ENCODE measurements at regions of chr1 and their contacts with region 1.

Region 1: DNA sequence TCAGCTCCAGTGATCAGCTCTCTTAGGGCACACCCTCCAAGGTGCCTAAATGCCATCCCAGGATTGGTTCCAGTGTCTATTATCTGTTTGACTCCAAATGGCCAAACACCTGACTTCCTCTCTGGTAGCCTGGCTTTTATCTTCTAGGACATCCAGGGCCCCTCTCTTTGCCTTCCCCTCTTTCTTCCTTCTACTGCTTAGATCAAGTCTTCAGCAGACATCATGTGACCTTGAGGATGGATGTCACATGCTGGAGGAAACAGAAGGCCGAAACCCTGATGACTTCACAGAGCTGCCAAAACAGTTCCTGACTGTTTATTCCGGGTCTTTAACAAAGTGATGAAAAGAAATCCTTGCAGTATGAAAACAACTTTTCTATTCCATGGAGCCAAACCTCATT is 24.4 kb upstream of the WDR26 start:
- DNase-seq: no peak
- H3K4me3 Mint-ChIP-seq: no peak overlapping the region
- H3K27ac Mint-ChIP-seq: peak overlapping the region; percentile 47
- H3K4me1 Mint-ChIP-seq: peaks cover 24% of the 10 kb centered on the region
- H3K27me3 Mint-ChIP-seq: no peaks in the 10 kb centered on the region

Region 2: DNA sequence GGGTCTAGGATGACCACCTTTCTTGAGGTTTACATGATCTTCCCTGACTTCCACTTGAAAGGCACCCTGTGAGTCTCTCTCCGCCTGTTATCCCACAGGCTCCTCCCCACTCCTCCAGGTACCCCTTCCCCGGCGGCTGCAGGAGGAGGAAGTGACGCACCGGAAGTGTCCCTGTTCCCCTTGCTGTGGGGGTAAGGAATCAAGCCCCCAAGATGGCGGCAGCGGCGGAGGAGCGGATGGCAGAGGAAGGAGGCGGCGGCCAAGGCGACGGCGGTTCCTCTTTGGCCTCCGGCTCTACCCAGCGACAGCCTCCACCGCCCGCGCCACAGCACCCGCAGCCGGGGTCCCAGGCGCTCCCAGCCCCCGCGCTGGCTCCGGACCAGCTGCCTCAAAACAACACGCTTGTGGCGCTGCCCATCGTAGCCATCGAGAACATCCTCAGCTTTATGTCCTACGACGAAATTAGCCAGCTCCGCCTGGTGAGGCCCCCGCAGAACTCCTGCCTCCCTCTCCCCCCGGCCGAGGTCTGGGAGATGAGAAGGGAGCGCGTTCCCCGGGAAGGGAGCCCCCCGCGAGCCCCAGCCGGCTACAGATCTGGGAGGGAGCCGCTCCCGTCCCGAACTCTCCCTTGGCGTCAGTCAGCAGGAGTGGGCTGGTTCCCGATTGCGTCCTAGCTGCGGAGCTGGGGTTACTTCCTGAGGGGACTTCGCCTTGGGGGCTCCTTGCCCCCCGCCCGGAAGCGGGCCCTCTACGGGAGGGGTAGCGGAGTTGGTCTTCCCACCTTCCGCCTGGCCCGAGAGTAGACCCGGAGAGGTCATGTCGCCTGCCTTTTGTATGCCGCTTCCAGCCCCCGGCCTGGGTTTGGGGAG is 344.8 kb before region 1 on chr1 and contains the start of gene FBXO28:
- CTCF ChIA-PET with region 1: interaction called, 20 read pairs
- DNase-seq: peak; percentile 98
- H3K4me3 Mint-ChIP-seq: peak within 1 kb of the TSS; percentile 79
- H3K27ac Mint-ChIP-seq: peak within 1 kb of the TSS; percentile 91
- H3K4me1 Mint-ChIP-seq: peaks cover 30% of the 10 kb centered on the region
- H3K27me3 Mint-ChIP-seq: peaks cover 20% of the 10 kb centered on the region

Region 3: GRCh38 chr1:224333309-224333926 is 125.6 kb before region 1 on chr1:
- CTCF ChIA-PET with region 1: interaction called, 26 read pairs
- DNase-seq: peak; percentile 48
- H3K4me3 Mint-ChIP-seq: no peak overlapping the region
- H3K27ac Mint-ChIP-seq: no peak overlapping the region
- H3K4me1 Mint-ChIP-seq: peaks cover 38% of the 10 kb centered on the region
- H3K27me3 Mint-ChIP-seq: peaks cover 3% of the 10 kb centered on the region

Region 4: DNA sequence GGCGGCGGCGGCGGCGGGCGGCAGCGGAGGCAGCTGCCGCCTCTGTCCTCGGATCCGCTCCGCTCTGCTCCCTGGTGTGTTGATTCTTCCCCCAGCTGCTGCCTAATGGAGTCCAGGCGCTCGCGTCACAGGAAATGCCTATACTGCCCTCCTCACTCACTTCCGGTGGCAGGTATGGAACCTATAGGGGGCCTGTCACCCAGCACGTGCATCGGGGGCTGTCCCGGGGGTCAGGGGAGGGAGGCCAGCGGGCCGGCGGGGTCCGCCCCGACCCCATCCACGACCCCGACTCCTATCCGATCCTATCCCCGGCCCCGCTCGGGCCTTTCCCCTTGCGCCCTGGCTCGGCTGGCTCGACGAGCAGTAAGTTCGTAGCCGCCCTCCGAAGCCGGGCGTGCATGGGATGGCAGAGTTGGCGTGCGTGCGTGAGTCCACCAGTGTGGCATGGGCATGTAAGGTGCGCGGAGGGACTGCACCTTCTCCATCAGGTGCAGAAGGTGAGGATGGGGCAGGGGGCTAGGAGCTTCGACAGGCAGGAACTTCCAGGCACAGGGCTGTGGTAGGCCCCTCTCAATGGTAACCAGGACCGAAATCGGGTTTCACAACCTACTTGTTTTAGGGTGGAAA is 24.2 kb before region 1 on chr1 and contains the start of gene WDR26:
- CTCF ChIA-PET with region 1: interaction called, 29 read pairs
- DNase-seq: peak; percentile 93
- H3K4me3 Mint-ChIP-seq: peak within 1 kb of the TSS; percentile 95
- H3K27ac Mint-ChIP-seq: peak within 1 kb of the TSS; percentile 97
- H3K4me1 Mint-ChIP-seq: peaks cover 53% of the 10 kb centered on the region
- H3K27me3 Mint-ChIP-seq: no peaks in the 10 kb centered on the region

Region 5: DNA sequence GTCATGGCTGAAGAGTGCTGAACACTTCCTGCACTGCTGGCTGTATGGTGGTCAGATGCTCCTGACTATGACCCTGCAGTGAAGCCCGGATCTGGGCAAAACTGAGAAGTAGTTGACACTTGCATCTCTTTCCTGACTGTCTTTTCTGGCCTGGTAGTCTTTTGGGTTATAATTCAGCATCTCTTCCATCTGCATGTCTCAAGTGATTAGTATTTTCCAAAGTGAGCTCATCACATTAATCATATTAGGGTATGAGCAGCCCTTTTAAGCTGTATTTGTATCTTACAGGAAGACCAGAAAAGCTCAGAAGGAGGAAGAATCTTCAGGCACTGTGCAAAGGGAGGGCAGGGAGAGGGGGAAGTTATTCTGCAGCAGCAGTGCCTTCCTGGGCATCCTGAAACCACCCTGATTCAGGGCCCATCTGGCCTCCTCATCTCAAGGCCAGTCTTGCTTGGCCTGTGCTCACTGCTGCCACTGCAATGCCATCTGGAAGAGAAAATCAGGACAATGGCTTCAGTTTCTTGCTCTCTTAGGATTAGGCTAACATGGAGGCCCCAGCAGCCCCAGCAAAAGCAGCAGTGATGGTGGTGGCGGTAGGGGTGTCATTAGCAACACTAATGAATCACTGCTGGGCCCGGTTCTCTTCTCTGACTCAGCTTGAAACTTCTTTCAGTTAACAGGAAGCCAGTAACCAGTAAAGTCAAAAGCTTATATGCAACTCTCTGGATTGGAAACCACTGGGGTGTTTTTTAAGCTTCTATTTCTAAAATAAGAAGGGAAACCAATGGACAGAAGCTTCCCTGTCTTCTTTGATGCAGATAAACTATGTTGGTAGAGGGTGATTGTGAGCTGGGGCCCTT is 38.9 kb after region 1 on chr1:
- CTCF ChIA-PET with region 1: interaction called, 18 read pairs
- DNase-seq: peak; percentile 80
- H3K4me3 Mint-ChIP-seq: peak overlapping the region; percentile 34
- H3K27ac Mint-ChIP-seq: peak overlapping the region; percentile 90
- H3K4me1 Mint-ChIP-seq: peaks cover 59% of the 10 kb centered on the region
- H3K27me3 Mint-ChIP-seq: peaks cover 3% of the 10 kb centered on the region

Measured in activated naive CD4-positive, alpha-beta T cell treated with anti-CD3 and anti-CD28 coated beads, Interleukin-2, amount 10 ng/mL, durations not matched to agents 7 days and 5 days (primary cell).